ENCODE measurements at regions of chr2 and their contacts with region 1.

Region 1: GRCh38 chr2:39234754-39235153 is 9.0 kb downstream of the CDKL4 start:
- DNase-seq: peak in 1 of 3 donors; percentile 10
- H3K4me3 ChIP-seq: no peak overlapping the region
- H3K27ac ChIP-seq: no peak overlapping the region
- H3K4me1 ChIP-seq: no peaks in the 10 kb centered on the region
- H3K27me3 ChIP-seq: no peaks in the 10 kb centered on the region

Region 2: GRCh38 chr2:38815614-38816479 is 418.9 kb before region 1 on chr2:
- CTCF ChIA-PET with region 1: no interaction called
- POLR2A ChIA-PET with region 1: no interaction called
- DNase-seq: no peak
- H3K4me3 ChIP-seq: no peak overlapping the region
- H3K27ac ChIP-seq: no peak overlapping the region
- H3K4me1 ChIP-seq: no peaks in the 10 kb centered on the region
- H3K27me3 ChIP-seq: no peaks in the 10 kb centered on the region

Region 3: DNA sequence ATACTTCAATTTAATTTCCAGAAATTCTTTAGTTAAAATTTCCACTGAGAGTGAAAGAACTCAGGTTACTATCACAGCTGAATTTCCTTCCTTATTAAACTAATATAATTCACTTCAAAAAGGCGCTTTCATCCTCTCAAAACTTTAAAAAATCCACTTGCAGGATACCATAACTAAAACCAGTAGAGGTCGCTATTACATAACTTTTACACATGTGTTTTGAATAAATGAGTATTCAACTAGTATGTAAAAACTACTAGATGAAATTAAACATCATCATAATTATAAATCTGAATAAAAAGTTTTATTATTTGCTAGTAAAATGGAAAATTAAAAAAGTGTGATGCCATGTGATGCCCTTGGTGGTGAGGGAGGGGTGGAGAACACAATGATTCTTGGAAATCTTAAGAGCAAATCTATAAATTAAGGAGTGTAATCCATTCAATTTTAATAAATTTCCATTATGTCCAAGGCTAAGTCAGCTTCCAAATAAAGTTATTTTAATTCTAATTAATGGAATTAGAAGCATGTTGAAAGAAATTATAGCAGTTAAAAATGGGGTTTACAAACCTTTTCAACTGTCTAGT is 175.3 kb before region 1 on chr2:
- CTCF ChIA-PET with region 1: interaction called, 198 read pairs
- POLR2A ChIA-PET with region 1: no interaction called
- DNase-seq: peak; percentile 63 to 83 (median 77)
- H3K4me3 ChIP-seq: no peak overlapping the region
- H3K27ac ChIP-seq: no peak overlapping the region
- H3K4me1 ChIP-seq: no peaks in the 10 kb centered on the region
- H3K27me3 ChIP-seq: no peaks in the 10 kb centered on the region

Region 4: DNA sequence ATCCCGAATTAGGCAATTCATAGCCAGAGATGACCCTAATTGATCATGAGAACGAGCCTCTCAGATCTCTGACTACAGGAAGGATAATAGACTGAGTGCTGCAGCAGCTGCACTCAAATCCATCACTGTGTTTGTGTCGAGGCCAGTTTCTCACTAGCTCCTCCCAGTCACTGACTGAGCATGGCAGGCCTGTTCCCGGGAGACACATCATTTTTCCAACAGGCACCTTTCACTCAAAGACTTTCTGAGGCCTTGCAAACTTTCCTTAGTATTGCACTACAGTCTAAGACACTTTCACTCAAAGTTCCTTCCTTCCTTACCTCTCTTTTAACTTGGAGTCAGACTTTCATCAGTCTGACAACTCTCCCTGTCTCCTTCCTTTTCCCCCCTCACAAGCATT is 127.6 kb before region 1 on chr2:
- CTCF ChIA-PET with region 1: no interaction called
- POLR2A ChIA-PET with region 1: no interaction called
- DNase-seq: no peak
- H3K4me3 ChIP-seq: no peak overlapping the region
- H3K27ac ChIP-seq: peak overlapping the region in 1 of 2 experiments; percentile 23
- H3K4me1 ChIP-seq: no peaks in the 10 kb centered on the region
- H3K27me3 ChIP-seq: no peaks in the 10 kb centered on the region

Measured in common myeloid progenitor, CD34-positive (primary cell).